GM10248 (cell line): ENCODE measurements at regions of chr6 and their contacts with region 1.

Region 1: GRCh38 chr6:149216459-149216858 is 101.1 kb upstream of the TAB2 start:
- DNase-seq: no peak
- CTCF ChIP-seq: no peak

Region 2: DNA sequence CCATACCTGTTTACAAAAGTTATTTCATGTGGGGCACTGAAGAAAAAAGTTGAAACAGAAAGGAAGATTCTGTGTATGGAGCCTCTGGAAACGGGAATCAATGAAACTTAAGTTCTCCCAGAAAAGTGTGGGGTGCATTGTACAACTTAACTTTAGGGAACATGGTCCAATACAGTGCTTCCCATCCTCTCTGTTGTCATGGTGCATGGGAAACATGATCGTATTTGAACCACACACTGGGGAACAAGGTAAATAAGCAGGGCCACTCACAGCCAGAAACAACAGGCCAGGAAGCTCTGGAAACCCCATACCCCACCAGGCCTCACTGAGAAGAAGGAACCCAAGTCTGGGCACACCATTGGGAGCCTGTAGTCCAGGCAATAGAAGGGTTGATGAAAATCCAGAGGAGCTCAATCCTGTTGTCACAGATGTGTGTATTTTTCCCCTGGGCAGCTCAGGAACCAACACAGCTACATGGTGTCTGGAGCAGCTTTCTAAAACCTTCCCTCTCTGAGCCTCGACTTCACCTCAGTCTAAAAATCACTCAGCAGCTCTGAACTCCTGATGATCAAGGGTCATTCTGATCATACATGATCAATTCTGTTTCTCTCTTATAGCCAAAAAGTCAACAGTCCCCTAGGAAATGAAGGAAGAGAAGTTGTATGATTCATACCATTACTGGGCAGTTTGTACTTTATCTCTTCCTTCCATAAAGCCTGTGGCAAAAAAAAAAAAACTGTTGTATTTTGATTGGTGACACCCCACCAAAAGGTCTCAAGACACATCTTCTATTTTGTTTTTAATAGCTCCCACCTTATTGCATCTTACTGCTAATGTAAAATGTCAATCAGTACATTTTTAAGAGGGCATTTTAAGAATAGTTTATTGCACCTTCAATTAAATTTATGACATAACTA is 97.5 kb before region 1 on chr6:
- CTCF ChIA-PET with region 1: no interaction called
- POLR2A ChIA-PET with region 1: no interaction called
- DNase-seq: no peak
- CTCF ChIP-seq: no peak

Region 3: GRCh38 chr6:149147938-149148718 is 68.3 kb before region 1 on chr6:
- CTCF ChIA-PET with region 1: no interaction called
- POLR2A ChIA-PET with region 1: no interaction called
- DNase-seq: no peak
- CTCF ChIP-seq: no peak

Region 4: GRCh38 chr6:149499066-149499465 is 282.6 kb after region 1 on chr6:
- CTCF ChIA-PET with region 1: no interaction called
- POLR2A ChIA-PET with region 1: interaction called, 13 read pairs
- DNase-seq: no peak
- CTCF ChIP-seq: no peak